AG04450 (cell line): ENCODE measurements at regions of chr2 and their contacts with region 1.

Region 1: GRCh38 chr2:158024288-158024898 is 77.3 kb upstream of the UPP2 start:
- DNase-seq: no peak
- H3K4me3 ChIP-seq: no peak overlapping the region
- H3K27ac ChIP-seq: no peak overlapping the region
- H3K27me3 ChIP-seq: no peaks in the 10 kb centered on the region
- CTCF ChIP-seq: peak; percentile 87

Region 2: DNA sequence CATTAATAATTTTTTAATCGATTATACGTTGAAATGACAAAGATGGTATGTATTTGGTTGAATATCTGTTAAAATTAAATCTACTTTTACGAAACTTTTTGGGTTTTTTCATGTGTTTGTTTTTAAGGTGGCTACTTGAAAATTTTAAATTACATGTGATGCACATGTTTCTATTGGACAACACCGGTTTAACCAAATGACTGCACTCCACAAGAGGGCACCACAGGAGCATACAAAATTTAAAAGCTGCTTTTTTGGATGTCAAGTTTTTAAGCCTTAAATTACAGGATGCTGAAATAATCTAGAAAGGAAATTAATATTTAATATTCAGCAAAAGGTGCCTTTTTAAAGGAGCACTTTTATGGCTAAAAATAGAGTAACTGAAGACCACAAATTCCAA is 247.0 kb before region 1 on chr2:
- CTCF ChIA-PET with region 1: interaction called, 15 read pairs
- POLR2A ChIA-PET with region 1: no interaction called
- DNase-seq: peak; percentile 33
- H3K4me3 ChIP-seq: no peak overlapping the region
- H3K27ac ChIP-seq: no peak overlapping the region
- H3K27me3 ChIP-seq: no peaks in the 10 kb centered on the region
- CTCF ChIP-seq: peak; percentile 74

Region 3: GRCh38 chr2:158202161-158202815 is 177.9 kb after region 1 on chr2:
- CTCF ChIA-PET with region 1: no interaction called
- POLR2A ChIA-PET with region 1: no interaction called
- DNase-seq: no peak
- H3K4me3 ChIP-seq: no peak overlapping the region
- H3K27ac ChIP-seq: no peak overlapping the region
- H3K27me3 ChIP-seq: no peaks in the 10 kb centered on the region
- CTCF ChIP-seq: no peak